GM23248 (cell line): ENCODE measurements at regions of chr5 and their contacts with region 1.

Region 1: DNA sequence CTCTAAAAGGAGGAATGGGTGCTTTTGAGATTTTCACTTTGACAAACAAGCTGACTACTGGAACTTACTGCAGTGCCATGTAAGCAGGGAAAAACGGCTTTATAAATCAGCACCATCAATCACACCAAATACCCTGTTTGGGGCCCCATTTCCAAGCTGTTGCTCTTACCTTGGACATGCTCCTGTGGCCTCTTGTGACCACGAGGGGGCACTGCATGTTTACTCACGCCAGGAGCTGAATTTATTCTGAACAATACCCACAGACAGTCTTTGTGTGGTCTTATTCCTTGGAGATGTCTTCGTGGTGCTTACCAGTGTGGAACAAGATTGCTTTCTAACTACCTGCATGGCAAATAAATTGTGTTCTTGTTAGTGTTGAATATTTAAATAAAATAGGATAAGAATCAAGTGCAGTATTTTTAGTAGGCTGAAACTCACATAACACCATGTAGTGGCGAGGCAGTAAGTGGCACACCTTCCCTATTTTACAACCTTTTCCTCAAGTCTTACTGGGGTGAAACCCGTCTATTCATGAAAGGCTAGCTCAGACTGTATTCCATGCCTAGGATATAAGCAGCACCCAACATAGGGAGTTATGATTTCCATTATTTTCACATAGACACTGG is 155.5 kb upstream of the NMUR2 start:
- DNase-seq: peak; percentile 68
- H3K4me3 ChIP-seq: no peak overlapping the region
- H3K27ac ChIP-seq: no peak overlapping the region
- H3K4me1 ChIP-seq: no peaks in the 10 kb centered on the region
- H3K27me3 ChIP-seq: peaks cover 6% of the 10 kb centered on the region; the same call in 1 of the 2 replicates

Region 2: DNA sequence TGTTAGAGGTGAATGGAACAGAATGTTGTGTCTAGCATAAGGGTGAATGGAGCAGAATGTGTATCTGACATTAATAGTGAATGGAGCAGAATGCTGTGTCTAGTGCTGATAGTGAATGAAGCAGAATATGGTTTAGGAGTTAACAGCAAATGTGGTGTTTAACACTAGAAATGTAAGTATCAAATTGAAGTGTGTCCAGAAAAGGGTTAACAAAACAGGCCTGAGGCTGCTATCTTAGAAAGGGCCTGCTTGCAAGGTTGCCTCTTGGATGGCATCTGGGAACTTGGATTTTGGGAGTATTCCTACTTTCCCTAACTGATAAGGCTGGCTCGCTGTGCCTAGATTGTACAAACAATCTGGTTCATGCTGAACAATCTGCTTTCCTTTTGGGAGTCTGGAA is 712.8 kb before region 1 on chr5:
- in situ Hi-C with region 1: no loop called
- DNase-seq: no peak
- H3K4me3 ChIP-seq: no peak overlapping the region
- H3K27ac ChIP-seq: no peak overlapping the region
- H3K4me1 ChIP-seq: no peaks in the 10 kb centered on the region
- H3K27me3 ChIP-seq: no peaks in the 10 kb centered on the region

Region 3: DNA sequence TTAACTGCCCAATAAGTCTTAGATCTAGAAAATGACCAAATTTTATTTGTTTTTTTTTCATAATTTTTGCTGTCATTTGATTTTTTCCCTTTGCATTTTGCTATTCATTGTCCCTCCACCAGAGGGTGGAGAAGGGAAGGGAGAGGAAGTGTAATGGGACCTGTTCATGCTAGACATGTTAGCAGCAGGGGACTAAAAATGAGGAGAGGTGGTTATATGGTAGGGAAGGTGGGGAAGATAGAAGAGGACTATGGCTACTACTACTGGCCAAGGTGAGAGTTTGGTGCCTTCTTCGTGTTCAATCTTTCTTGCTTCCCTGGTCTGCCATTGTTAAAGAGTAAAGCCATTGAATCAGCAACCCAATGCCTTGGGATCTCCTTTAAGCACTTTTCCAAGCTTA is 936.2 kb after region 1 on chr5:
- in situ Hi-C with region 1: loop called (anchors 25 kb)
- DNase-seq: peak; percentile 60
- H3K4me3 ChIP-seq: no peak overlapping the region
- H3K27ac ChIP-seq: no peak overlapping the region
- H3K4me1 ChIP-seq: no peaks in the 10 kb centered on the region
- H3K27me3 ChIP-seq: no peaks in the 10 kb centered on the region

Region 4: DNA sequence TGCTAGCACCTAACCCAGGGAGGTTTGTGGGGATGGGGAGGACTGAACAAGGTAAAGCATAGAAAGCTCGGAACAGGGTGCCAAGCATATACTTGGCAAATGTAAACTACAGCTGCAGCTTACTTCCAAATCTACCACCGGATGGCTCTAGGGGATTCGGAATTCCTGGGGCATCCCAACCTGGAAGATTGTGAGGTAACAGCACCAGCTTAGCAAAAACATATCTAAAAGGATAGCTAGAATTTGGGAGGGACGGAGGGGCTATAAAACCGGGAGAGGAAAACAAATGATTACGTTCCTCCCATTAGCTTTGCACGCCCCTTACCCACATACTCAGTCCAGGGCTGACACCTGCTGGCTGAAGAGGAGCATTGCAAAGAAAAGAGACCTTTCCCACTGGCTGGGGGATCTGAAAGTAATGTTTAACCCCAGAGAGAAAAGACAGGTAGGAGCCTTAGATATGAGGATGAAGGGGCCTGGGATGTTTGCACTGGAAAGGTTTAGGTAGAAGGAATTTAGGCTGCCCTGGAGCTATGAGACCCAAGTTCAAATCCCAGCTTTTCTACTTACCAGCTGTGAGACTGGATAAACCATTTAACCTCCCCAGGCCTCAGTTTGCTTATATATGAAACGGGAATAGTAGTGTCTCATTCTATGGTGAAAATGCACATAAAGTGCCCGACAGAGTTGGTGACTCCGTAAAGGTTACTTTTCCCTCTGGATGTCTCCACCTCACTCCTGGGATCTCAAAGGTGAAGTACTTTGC is 1404.4 kb after region 1 on chr5:
- in situ Hi-C with region 1: loop called (anchors 10 kb)
- DNase-seq: peak; percentile 69
- H3K4me3 ChIP-seq: peak overlapping the region; percentile 70
- H3K27ac ChIP-seq: no peak overlapping the region
- H3K4me1 ChIP-seq: peaks cover 12% of the 10 kb centered on the region
- H3K27me3 ChIP-seq: no peaks in the 10 kb centered on the region